ENCODE measurements at regions of chr15 and their contacts with region 1.

Region 1: DNA sequence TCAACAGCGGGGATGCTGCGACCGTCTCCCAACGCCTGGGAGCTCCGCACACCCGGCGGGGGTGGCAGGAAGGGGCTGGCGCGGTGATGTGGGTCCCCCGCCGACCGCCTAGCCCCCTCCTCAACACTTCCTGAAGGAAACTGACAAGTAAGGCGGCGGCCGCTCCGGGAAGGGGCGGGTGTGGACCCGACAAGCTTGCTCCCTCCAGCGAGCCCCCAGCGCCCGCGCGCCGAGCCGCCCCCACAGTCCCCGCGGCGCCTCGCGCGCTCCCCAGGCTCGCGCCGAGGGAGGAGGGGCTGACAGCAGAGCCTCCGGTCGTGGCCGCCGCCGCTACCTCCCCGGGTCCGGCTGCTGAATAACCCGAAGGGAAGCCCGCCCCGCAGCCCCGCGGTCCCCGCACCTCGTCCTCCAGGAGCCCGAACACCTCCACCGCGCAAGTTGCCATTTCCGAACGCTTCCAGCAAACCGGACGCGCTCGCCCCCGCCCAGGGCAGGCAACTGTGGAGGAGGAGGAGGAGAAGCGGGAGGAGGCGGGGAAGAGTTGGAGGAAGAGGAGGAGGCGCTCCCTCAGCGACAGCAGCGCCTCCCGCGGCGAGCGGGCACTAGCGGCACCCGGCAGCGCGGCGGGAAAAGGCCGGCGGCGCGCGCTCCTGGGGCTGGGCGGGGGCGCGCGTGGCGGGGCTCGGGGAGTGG is at the start of gene NEDD4:
- DNase-seq: peak; percentile 90
- H3K4me3 Mint-ChIP-seq: peak within 1 kb of the TSS; percentile 83
- H3K27ac Mint-ChIP-seq: peak within 1 kb of the TSS; percentile 72
- H3K4me1 Mint-ChIP-seq: peaks cover 37% of the 10 kb centered on the region
- H3K27me3 Mint-ChIP-seq: no peaks in the 10 kb centered on the region
- CTCF ChIP-seq: peak; percentile 44
- total RNA-seq, gene NEDD4: 57.7 and 60.3 TPM in 2 replicates

Region 2: GRCh38 chr15:55907797-55908196 is 85.5 kb before region 1 on chr15:
- CTCF ChIA-PET with region 1: no interaction called
- POLR2A ChIA-PET with region 1: interaction called, 17 read pairs
- intact Hi-C with region 1: no loop called
- DNase-seq: peak; percentile 81
- H3K4me3 Mint-ChIP-seq: no peak overlapping the region
- H3K27ac Mint-ChIP-seq: peak overlapping the region; percentile 89
- H3K4me1 Mint-ChIP-seq: peaks cover 50% of the 10 kb centered on the region
- H3K27me3 Mint-ChIP-seq: no peaks in the 10 kb centered on the region
- CTCF ChIP-seq: no peak

Region 3: GRCh38 chr15:56040081-56041035 is 47.1 kb after region 1 on chr15:
- CTCF ChIA-PET with region 1: interaction called, 10 read pairs
- POLR2A ChIA-PET with region 1: interaction called, 213 read pairs
- intact Hi-C with region 1: loop called (anchors 1 kb)
- DNase-seq: peak; percentile 96
- H3K4me3 Mint-ChIP-seq: peak overlapping the region; percentile 42
- H3K27ac Mint-ChIP-seq: peak overlapping the region; percentile 86
- H3K4me1 Mint-ChIP-seq: peaks cover 34% of the 10 kb centered on the region
- H3K27me3 Mint-ChIP-seq: no peaks in the 10 kb centered on the region
- CTCF ChIP-seq: no peak

Region 4: DNA sequence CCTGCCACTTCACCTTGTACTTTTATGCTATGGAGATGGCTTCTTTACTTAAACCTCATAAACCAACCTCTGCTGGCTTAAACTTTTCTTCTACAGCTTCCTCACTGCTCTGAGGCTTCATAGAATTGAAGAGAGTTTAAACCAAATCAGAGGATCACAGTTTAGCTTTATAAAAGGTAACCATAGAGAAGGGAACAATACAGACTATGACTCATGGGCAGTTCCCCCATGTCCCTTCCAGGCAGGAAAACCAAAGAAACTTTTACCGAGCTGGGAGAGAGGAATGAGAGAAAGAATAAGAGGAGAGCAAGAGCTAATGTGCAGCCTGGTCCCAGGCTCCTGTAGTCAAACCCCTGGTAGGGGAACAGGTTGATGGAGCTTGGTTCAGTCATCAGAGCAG is 54.1 kb after region 1 on chr15:
- CTCF ChIA-PET with region 1: interaction called, 79 read pairs
- POLR2A ChIA-PET with region 1: interaction called, 213 read pairs
- intact Hi-C with region 1: loop called (anchors 1 kb)
- DNase-seq: no peak
- H3K4me3 Mint-ChIP-seq: no peak overlapping the region
- H3K27ac Mint-ChIP-seq: peak overlapping the region; percentile 43
- H3K4me1 Mint-ChIP-seq: peaks cover 13% of the 10 kb centered on the region
- H3K27me3 Mint-ChIP-seq: no peaks in the 10 kb centered on the region
- CTCF ChIP-seq: no peak